CD8-positive, alpha-beta T cell (primary cell): ENCODE measurements at regions of chr4 and their contacts with region 1.

Region 1: GRCh38 chr4:123396307-123397143 is at the start of gene SPRY1:
- DNase-seq: peak; percentile 40 to 88 (median 75)
- ATAC-seq: peak; percentile 58
- H3K4me3 ChIP-seq: peak within 1 kb of the TSS; percentile 54 to 66
- H3K4me3 Mint-ChIP-seq: peak within 1 kb of the TSS; percentile 83
- H3K27ac ChIP-seq: peak within 1 kb of the TSS; percentile 21 to 24
- H3K27ac Mint-ChIP-seq: peak within 1 kb of the TSS; percentile 85
- H3K4me1 ChIP-seq: peaks cover 9% of the 10 kb centered on the region
- H3K4me1 Mint-ChIP-seq: peaks cover 24% of the 10 kb centered on the region
- H3K27me3 ChIP-seq: peaks cover 0 to 3% of the 10 kb centered on the region in 2 experiments
- H3K27me3 Mint-ChIP-seq: no peaks in the 10 kb centered on the region
- CTCF ChIP-seq: no peak
- total RNA-seq, gene SPRY1: 65.8 to 66.1 TPM

Region 2: GRCh38 chr4:122732329-122733026 is 664.0 kb before region 1 on chr4 and contains the start of gene BBS12:
- CTCF ChIA-PET with region 1: no interaction called
- POLR2A ChIA-PET with region 1: no interaction called
- intact Hi-C with region 1: loop called (anchors 1 to 10 kb)
- DNase-seq: peak; percentile 98 to 99 (median 99)
- ATAC-seq: peak; percentile 97
- H3K4me3 ChIP-seq: peak within 1 kb of the TSS; percentile 57 to 94
- H3K4me3 Mint-ChIP-seq: peak within 1 kb of the TSS; percentile 99
- H3K27ac ChIP-seq: peak within 1 kb of the TSS; percentile 81 to 95
- H3K27ac Mint-ChIP-seq: peak within 1 kb of the TSS; percentile 97
- H3K4me1 ChIP-seq: peaks cover 13% of the 10 kb centered on the region
- H3K4me1 Mint-ChIP-seq: peaks cover 18% of the 10 kb centered on the region
- H3K27me3 ChIP-seq: no peaks in the 10 kb centered on the region
- H3K27me3 Mint-ChIP-seq: no peaks in the 10 kb centered on the region
- CTCF ChIP-seq: no peak
- total RNA-seq, gene BBS12: 0.56 to 0.98 TPM

Region 3: GRCh38 chr4:123421227-123421936 is 24.9 kb after region 1 on chr4:
- CTCF ChIA-PET with region 1: no interaction called
- POLR2A ChIA-PET with region 1: interaction called, 3 read pairs
- intact Hi-C with region 1: loop called (anchors 2 kb)
- DNase-seq: peak in 2 of 9 experiments; percentile 32 to 41
- ATAC-seq: peak; percentile 49
- H3K4me3 ChIP-seq: no peak overlapping the region
- H3K4me3 Mint-ChIP-seq: peak overlapping the region; percentile 79
- H3K27ac ChIP-seq: peak overlapping the region in 1 of 2 experiments; percentile 31
- H3K27ac Mint-ChIP-seq: peak overlapping the region; percentile 89
- H3K4me1 ChIP-seq: peaks cover 5% of the 10 kb centered on the region
- H3K4me1 Mint-ChIP-seq: peaks cover 45% of the 10 kb centered on the region
- H3K27me3 ChIP-seq: no peaks in the 10 kb centered on the region
- H3K27me3 Mint-ChIP-seq: no peaks in the 10 kb centered on the region
- CTCF ChIP-seq: no peak

Region 4: DNA sequence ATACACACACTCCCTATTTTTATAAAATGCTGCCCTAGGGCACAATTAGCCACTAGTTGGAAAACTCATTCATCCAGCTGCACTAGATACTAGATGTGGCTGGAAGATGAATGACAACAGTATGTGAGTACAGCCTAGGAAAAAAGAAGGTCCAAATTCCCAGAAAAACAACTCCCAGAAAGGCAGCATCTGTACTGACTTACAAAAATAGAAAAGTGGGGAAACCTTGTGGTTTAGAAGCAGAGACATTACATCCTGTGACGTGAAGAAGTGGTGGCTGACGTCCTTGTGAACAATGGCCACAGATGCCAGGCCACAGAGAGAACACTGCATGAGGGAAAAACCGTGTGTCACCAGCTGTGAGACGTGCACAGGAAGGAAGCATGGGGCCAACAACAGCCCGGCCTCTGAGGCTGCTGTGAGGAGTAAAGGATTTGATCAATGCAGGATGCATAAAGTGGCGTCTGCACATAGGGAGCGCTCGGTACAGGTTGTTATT is 81.2 kb after region 1 on chr4:
- CTCF ChIA-PET with region 1: interaction called, 3 read pairs
- POLR2A ChIA-PET with region 1: no interaction called
- intact Hi-C with region 1: loop called in 1 of 2 experiments (anchors 5 kb)
- DNase-seq: peak in 7 of 9 experiments; percentile 28 to 85 (median 60)
- ATAC-seq: peak; percentile 94
- H3K4me3 ChIP-seq: no peak overlapping the region
- H3K4me3 Mint-ChIP-seq: no peak overlapping the region
- H3K27ac ChIP-seq: no peak overlapping the region
- H3K27ac Mint-ChIP-seq: peak overlapping the region; percentile 80
- H3K4me1 ChIP-seq: peaks cover 18% of the 10 kb centered on the region
- H3K4me1 Mint-ChIP-seq: peaks cover 23% of the 10 kb centered on the region
- H3K27me3 ChIP-seq: no peaks in the 10 kb centered on the region
- H3K27me3 Mint-ChIP-seq: no peaks in the 10 kb centered on the region
- CTCF ChIP-seq: no peak

Region 5: DNA sequence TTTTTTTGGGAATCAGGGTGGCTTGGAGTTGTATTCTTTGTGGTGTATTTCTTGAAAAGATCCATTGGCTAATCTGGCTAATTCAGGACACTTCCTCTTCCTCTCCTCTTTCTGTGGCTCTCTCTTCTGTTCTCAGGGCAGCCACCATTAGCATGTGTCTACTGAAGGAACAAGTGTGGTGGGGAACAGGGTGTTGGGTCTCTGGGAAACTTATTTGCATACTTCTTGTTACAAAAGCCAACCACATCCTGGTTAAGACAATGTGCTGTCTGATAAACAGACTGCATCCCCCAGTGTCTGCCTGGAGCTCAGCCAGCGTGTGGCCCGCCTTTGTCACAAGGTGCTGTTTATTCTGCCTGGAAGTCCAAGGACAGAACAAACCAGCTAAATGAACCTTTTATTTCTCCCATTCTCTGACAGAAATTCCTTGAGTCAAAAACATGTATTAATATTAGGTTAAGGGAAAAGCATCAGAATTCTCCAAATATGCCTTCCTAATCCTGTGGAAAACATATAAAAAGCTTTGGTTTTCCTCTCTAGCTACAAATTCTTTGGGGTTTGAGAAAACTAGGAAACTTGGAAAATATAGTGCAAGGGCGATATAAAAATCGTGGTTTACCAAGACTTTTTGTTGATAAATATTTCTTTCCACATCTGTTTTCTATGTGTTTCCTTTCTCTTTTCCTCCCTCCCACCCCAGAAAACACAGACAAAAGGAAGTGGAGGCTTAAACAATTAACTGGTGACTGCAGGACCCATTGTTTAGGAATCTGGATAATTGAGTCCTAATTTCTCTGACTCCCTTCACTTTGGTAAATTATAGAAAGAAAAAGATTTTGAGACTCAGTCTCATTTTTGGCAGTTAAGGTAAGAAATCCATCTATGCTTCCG is 203.6 kb after region 1 on chr4:
- CTCF ChIA-PET with region 1: no interaction called
- POLR2A ChIA-PET with region 1: interaction called, 4 read pairs
- intact Hi-C with region 1: loop called (anchors 5 kb)
- DNase-seq: peak; percentile 25 to 88 (median 65)
- ATAC-seq: peak; percentile 97
- H3K4me3 ChIP-seq: no peak overlapping the region
- H3K4me3 Mint-ChIP-seq: peak overlapping the region; percentile 51
- H3K27ac ChIP-seq: peak overlapping the region in 1 of 2 experiments; percentile 54
- H3K27ac Mint-ChIP-seq: peak overlapping the region; percentile 95
- H3K4me1 ChIP-seq: peaks cover 26% of the 10 kb centered on the region
- H3K4me1 Mint-ChIP-seq: peaks cover 57% of the 10 kb centered on the region
- H3K27me3 ChIP-seq: no peaks in the 10 kb centered on the region
- H3K27me3 Mint-ChIP-seq: no peaks in the 10 kb centered on the region
- CTCF ChIP-seq: no peak

Region 6: GRCh38 chr4:123744664-123745290 is 348.3 kb after region 1 on chr4:
- CTCF ChIA-PET with region 1: no interaction called
- POLR2A ChIA-PET with region 1: no interaction called
- intact Hi-C with region 1: loop called in 1 of 2 experiments (anchors 10 kb)
- DNase-seq: no peak
- ATAC-seq: no peak
- H3K4me3 ChIP-seq: no peak overlapping the region
- H3K4me3 Mint-ChIP-seq: no peak overlapping the region
- H3K27ac ChIP-seq: no peak overlapping the region
- H3K27ac Mint-ChIP-seq: no peak overlapping the region
- H3K4me1 ChIP-seq: no peaks in the 10 kb centered on the region
- H3K4me1 Mint-ChIP-seq: peaks cover 5% of the 10 kb centered on the region
- H3K27me3 ChIP-seq: no peaks in the 10 kb centered on the region
- H3K27me3 Mint-ChIP-seq: peaks cover 16% of the 10 kb centered on the region
- CTCF ChIP-seq: no peak